ENCODE measurements at regions of chr1 and their contacts with region 1.

Region 1: GRCh38 chr1:88998716-88999115 is 6.3 kb upstream of the KYAT3 start:
- DNase-seq: no peak
- ATAC-seq: peak; percentile 88
- H3K4me3 Mint-ChIP-seq: no peak overlapping the region
- H3K27ac Mint-ChIP-seq: no peak overlapping the region
- H3K4me1 Mint-ChIP-seq: peaks cover 6% of the 10 kb centered on the region
- H3K27me3 Mint-ChIP-seq: no peaks in the 10 kb centered on the region
- CTCF ChIP-seq: no peak

Region 2: GRCh38 chr1:88935522-88936222 is 63.0 kb before region 1 on chr1:
- CTCF ChIA-PET with region 1: no interaction called
- POLR2A ChIA-PET with region 1: no interaction called
- intact Hi-C with region 1: no loop called
- DNase-seq: no peak
- ATAC-seq: peak; percentile 50
- H3K4me3 Mint-ChIP-seq: no peak overlapping the region
- H3K27ac Mint-ChIP-seq: no peak overlapping the region
- H3K4me1 Mint-ChIP-seq: peaks cover 3% of the 10 kb centered on the region
- H3K27me3 Mint-ChIP-seq: no peaks in the 10 kb centered on the region
- CTCF ChIP-seq: no peak

Region 3: GRCh38 chr1:88983791-88984559 is 14.7 kb before region 1 on chr1:
- CTCF ChIA-PET with region 1: interaction called, 16 read pairs
- POLR2A ChIA-PET with region 1: no interaction called
- intact Hi-C with region 1: no loop called
- DNase-seq: no peak
- ATAC-seq: peak; percentile 84
- H3K4me3 Mint-ChIP-seq: peak overlapping the region; percentile 29
- H3K27ac Mint-ChIP-seq: peak overlapping the region; percentile 56
- H3K4me1 Mint-ChIP-seq: peaks cover 62% of the 10 kb centered on the region
- H3K27me3 Mint-ChIP-seq: no peaks in the 10 kb centered on the region
- CTCF ChIP-seq: no peak

Region 4: DNA sequence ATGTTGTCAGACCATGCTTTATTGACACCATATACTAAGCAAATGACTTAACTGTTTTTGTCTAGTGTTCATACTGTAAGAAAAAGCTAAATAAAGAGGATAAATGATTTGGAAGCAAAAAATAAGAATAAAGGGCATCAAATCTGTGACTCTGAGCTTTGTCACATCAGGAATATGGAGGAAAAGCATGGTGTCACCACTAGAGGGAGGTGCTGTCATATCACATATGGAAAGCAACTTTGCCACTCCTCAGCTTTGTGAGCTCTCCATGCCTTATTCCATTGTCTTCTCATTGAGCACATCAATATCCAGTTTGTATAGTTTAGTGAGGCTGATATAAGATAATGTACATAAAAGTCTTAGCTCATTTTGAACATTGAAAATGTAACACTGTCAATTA is 87.1 kb after region 1 on chr1:
- CTCF ChIA-PET with region 1: interaction called, 10 read pairs
- POLR2A ChIA-PET with region 1: no interaction called
- intact Hi-C with region 1: loop called (anchors 1 kb)
- DNase-seq: no peak
- ATAC-seq: peak; percentile 37
- H3K4me3 Mint-ChIP-seq: no peak overlapping the region
- H3K27ac Mint-ChIP-seq: no peak overlapping the region
- H3K4me1 Mint-ChIP-seq: peaks cover 4% of the 10 kb centered on the region
- H3K27me3 Mint-ChIP-seq: no peaks in the 10 kb centered on the region
- CTCF ChIP-seq: no peak

Region 5: DNA sequence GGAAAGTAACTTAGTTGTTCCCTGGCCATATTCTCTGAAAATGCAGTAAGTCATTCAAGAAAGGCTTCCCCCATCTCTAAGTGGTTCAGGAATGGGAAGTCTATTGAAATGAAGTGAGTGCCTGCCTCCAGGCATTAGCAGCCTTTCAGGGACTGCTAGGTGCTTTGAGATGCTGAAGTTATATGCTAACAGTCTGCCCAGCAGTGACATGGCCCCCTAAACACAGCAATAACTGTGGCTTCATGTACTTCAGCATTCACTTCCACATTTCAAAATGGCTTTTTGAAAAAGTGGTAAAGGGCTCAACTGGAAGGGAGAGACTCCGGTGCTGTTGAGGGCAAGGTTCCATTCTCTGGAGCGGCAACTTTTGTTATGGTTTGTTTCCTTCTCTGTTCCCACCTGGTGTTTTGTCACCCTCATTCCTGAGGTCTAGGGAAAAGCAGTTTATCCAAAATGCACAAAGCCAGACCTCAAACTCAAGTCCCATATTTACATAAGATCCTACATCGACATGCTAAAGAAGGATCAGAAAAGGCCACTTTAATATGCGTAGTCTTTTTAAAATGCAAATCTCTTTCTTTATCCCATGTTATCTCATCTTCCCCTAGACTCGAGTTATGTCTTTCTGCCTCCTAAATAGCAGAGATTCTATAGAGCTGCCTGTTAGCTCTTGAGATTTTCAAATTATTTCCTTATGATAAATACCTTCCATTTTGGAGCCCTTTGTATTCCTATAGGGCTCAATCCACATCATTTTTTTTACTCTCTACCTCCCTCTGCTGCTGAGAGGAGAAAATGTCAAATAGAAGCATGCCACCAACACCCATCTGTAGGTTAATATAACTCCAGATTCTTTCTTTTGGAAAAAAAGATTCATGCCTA is 600.0 kb after region 1 on chr1:
- CTCF ChIA-PET with region 1: no interaction called
- POLR2A ChIA-PET with region 1: no interaction called
- intact Hi-C with region 1: loop called (anchors 2 kb)
- DNase-seq: no peak
- ATAC-seq: peak; percentile 62
- H3K4me3 Mint-ChIP-seq: no peak overlapping the region
- H3K27ac Mint-ChIP-seq: no peak overlapping the region
- H3K4me1 Mint-ChIP-seq: peaks cover 4% of the 10 kb centered on the region
- H3K27me3 Mint-ChIP-seq: no peaks in the 10 kb centered on the region
- CTCF ChIP-seq: peak; percentile 24

Measured in activated B cell treated with CpG ODN at 0.5 μM for 24 hours (primary cell).